ENCODE measurements at regions of chr2 and their contacts with region 1.

Region 1: DNA sequence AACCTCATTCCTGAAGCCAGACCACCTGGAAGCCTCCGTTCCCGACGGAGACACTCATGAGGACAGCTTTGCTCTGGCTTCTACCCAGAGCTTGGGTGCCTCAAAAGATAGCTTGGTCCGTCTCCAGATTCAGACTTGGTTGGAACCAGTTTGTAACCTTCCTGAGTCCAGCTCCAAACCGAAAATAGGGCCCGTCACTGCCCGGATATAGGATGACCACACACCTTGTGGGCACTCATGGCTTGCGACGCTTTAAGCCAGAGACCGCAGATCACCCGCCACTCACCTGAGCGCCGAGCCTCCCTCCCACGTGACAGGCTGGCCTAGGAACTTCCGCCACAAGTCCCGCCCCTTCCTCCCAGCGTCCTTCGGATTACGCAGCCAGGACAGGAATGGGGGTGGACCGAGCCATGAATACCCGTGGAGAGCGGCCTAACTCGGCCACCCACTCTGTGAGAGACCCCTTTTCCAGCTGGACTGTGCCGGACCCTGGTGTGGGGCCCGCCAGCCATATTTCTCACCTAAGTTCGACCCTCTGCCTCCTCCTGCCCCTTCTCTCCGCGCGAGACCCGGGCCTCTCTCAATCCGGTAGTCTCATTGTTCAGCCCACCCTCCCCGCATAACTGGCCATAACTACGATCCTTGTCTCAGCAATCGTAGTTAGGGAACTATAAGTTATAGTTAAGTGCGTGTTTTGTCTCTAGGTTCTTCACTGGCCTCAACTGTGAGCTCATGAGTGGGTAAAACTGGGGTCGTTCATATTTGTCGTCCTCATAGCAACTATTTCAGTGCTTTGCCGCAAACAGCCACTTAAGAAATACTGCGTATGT is at the start of gene MPV17:
- DNase-seq: peak; percentile 92
- ATAC-seq: peak; percentile 96
- H3K4me3 Mint-ChIP-seq: peak within 1 kb of the TSS; percentile 98
- H3K27ac Mint-ChIP-seq: peak within 1 kb of the TSS; percentile 98
- H3K4me1 Mint-ChIP-seq: peaks cover 22% of the 10 kb centered on the region
- H3K27me3 Mint-ChIP-seq: no peaks in the 10 kb centered on the region
- total RNA-seq, gene MPV17: 78.0 to 80.5 TPM

Region 2: GRCh38 chr2:27356382-27357181 is 33.6 kb after region 1 on chr2 and contains the start of gene GTF3C2:
- CTCF ChIA-PET with region 1: interaction called, 4 read pairs
- POLR2A ChIA-PET with region 1: interaction called, 15 read pairs
- DNase-seq: peak; percentile 96
- ATAC-seq: peak; percentile 84
- H3K4me3 Mint-ChIP-seq: peak within 1 kb of the TSS; percentile 99
- H3K27ac Mint-ChIP-seq: peak within 1 kb of the TSS; percentile 97
- H3K4me1 Mint-ChIP-seq: peaks cover 47% of the 10 kb centered on the region
- H3K27me3 Mint-ChIP-seq: no peaks in the 10 kb centered on the region
- total RNA-seq, gene GTF3C2: 60.9 to 62.6 TPM